ENCODE measurements at regions of chr6 and their contacts with region 1.

Region 1: DNA sequence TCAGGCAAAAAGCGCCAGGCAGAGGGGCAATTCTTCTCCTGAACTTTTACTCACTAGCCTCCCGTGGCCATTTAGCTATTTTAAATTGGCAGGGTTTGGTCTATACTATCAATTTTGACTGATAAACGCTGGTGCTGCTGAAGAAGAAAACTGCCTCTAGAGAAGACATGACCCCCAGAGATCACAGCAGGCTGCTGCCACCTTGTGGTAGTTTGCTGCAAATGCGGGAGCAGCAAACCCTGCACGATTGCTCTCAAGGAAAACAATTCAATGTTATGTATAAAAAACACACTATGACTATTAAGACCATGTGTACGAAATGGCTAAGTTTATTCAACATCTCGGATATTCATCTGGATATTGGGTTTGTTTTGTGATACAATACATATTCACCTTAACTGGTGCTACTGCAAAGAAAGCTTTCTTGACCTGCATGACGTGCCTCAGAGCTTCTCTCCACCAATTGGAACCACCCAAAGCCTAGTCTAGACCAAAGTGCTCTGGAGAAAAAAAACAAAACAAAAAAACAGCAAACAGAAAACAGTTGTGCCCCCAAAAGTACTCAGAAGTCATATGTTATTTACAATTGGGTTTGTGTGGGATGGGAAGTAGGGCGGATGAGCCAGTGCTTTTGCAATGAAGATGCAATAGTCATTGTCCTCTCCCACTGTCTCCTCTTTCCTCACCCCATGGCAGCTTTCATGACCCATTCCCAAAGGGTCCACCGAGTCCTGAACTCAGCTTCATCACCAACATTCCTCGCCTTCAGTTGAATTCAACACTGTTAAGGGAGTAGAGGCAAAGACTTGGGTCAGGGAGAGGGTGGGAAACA is 19.6 kb upstream of the IL17F start:
- DNase-seq: peak; percentile 66 to 85
- ATAC-seq: peak; percentile 75
- H3K4me3 ChIP-seq: no peak overlapping the region
- H3K27ac ChIP-seq: no peak overlapping the region
- H3K4me1 ChIP-seq: no peaks in the 10 kb centered on the region
- H3K27me3 ChIP-seq: no peaks in the 10 kb centered on the region

Region 2: DNA sequence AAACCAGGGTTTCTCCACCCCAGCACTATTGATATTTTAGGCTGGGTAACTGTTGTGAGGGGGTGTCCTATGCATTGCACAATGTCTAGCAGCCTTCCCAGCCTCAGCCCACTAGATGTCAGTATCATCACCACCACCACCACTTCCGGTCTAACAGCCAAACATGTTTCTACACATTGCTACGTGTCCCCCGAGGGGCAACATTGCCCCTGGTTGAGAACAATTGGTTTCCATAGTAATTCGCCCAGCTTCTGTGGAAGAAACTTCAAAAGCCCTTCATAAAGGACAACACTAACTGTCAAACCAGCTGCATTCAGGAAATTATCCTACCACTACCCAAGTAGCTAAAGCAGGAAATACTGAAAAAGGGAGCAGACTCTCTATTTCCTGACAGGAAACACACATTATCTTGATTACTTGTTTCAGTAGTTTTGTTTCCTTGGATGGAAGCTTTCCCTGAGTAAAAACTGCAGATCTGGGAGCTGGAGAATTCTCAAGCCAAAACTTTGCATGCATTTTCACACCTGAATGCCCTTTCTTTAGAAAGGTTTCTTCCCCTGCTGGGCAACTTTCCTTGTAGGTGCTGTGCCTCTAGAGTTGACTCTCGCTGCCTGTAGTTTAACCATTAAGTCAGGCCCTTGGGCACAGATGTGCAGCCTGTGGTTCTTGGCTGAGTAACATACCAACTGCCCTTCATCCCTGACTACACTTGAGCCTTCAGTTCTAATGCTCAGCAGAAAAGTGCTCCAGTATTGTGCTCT is 200.2 kb before region 1 on chr6:
- intact Hi-C with region 1: loop called in 1 of 2 experiments (anchors 10 kb)
- DNase-seq: no peak
- ATAC-seq: peak; percentile 59
- H3K4me3 ChIP-seq: no peak overlapping the region
- H3K27ac ChIP-seq: no peak overlapping the region
- H3K4me1 ChIP-seq: no peaks in the 10 kb centered on the region
- H3K27me3 ChIP-seq: no peaks in the 10 kb centered on the region

Region 3: GRCh38 chr6:52180787-52181558 is 83.0 kb before region 1 on chr6:
- intact Hi-C with region 1: no loop called
- DNase-seq: no peak
- ATAC-seq: no peak
- H3K4me3 ChIP-seq: no peak overlapping the region
- H3K27ac ChIP-seq: no peak overlapping the region
- H3K4me1 ChIP-seq: no peaks in the 10 kb centered on the region
- H3K27me3 ChIP-seq: no peaks in the 10 kb centered on the region

Region 4: DNA sequence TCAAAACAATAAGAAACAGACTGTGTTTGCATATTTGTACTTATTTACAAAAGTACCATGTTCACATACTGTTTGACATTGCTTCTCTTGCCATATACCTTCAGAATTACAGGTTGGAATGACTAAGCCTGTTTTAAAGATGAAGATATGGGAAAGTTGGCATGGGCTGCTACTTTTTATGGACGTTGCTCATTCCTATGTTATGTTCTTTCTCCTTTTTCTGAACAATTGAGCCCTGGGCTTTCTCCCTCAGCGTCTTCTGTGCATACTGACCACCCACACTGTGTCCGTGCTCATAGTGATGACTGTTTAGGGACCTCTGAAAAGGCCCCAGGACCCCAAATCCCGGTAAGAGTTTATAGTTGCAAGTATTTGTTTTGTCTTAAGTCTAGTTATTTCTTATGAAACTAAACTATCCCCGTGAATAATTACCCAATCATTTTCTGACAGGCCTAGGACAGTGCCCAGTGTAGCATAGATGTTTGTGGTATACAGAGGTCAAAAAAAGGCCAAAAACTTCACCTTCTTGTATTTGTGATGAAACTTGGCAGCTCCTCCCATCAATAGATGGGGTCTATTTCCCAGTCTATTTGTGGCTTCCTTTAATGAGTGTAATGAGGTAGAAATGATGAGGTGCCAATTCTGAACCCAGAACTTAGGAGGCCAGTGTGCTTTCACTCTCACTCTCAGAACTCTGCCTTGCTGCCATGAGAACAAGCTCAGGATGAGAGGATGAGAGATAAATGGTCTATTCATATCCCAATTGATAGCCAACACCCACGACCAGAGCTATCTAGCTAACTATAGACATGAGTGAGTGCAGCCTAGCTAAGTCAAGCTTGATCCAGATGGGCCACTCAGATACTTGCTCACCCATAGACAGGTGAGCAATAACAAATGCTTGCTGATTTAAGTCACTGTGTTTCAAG is 690.2 kb after region 1 on chr6:
- intact Hi-C with region 1: no loop called
- DNase-seq: no peak
- ATAC-seq: no peak
- H3K4me3 ChIP-seq: no peak overlapping the region
- H3K27ac ChIP-seq: no peak overlapping the region
- H3K4me1 ChIP-seq: no peaks in the 10 kb centered on the region
- H3K27me3 ChIP-seq: no peaks in the 10 kb centered on the region

Measured in aorta (tissue), 5 donors.